ENCODE measurements at regions of chr1 and their contacts with region 1.

Region 1: GRCh38 chr1:27568300-27569087 is 35.5 kb downstream of the AHDC1 start:
- DNase-seq: no peak
- H3K4me3 ChIP-seq: peak overlapping the region; percentile 34
- H3K27ac ChIP-seq: no peak overlapping the region
- H3K27me3 ChIP-seq: no peaks in the 10 kb centered on the region
- CTCF ChIP-seq: peak; percentile 31

Region 2: GRCh38 chr1:27383039-27383605 is 185.4 kb before region 1 on chr1 and contains the start of gene CD164L2:
- in situ Hi-C with region 1: no loop called
- DNase-seq: no peak
- H3K4me3 ChIP-seq: no peak within 1 kb of the TSS
- H3K27ac ChIP-seq: no peak within 1 kb of the TSS
- H3K27me3 ChIP-seq: no peaks in the 10 kb centered on the region
- CTCF ChIP-seq: no peak

Region 3: DNA sequence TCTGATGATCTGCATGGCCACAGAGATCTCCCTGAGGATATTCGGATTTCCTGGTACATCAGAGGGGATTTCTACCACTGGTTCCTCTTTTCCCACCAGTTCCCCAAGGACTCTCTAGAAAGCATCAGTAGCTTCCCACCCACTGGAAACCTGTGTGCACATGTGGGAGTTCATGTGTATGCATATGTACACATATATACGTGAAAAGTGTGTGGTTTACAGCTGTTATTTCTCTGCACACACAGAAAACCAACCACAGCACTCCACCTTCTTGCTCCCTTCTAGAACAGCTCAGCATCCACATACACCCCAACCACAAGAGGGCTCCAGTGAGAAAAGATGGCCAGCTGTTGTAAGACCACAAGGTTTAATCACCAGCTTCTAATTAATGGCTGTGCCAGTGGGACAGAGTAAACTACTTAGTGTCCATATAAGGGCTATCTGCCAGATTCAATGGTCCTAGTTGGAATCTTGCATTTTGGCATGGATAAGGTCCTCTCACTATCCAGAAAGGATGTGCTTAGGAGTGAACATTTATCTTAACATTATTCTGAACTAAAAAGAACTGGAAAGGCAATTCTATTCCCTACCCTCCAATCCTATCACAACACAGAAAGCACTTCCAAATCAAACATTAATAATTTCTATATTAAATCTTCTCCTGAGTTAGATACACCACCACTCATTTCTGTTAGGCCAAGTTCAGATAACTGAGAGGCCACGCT is 151.9 kb before region 1 on chr1:
- in situ Hi-C with region 1: loop called (anchors 25 kb)
- DNase-seq: peak; percentile 62
- H3K4me3 ChIP-seq: no peak overlapping the region
- H3K27ac ChIP-seq: no peak overlapping the region
- H3K27me3 ChIP-seq: no peaks in the 10 kb centered on the region
- CTCF ChIP-seq: peak; percentile 87

Region 4: DNA sequence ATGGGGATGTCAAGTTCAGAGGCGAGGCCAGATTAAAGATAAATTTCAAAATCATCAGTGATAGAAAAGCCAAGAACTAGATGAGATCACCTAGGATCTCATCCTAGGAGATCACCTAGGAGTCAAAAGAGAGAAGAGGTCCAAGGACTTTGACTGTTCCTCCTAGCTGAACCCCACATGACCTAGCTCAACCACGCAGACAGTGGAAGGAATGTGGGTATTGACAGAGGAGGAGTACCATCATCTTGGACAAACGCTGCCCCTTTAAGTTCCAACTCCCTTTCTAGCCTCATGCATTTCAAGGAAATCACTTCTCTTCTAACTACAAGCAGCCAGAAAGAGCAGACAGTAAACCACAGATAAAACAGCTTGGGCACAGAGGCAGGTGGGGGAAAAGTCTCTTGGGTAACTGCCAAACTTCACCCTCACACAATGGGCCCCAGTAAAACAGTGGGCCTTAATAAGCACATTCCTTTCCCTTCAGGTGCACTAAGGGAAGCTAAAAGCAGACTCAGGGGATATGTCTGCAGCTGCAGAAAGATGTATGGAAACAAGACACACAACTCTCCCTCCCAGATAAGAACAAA is 144.7 kb after region 1 on chr1:
- in situ Hi-C with region 1: no loop called
- DNase-seq: no peak
- H3K4me3 ChIP-seq: no peak overlapping the region
- H3K27ac ChIP-seq: no peak overlapping the region
- H3K27me3 ChIP-seq: no peaks in the 10 kb centered on the region
- CTCF ChIP-seq: no peak

Region 5: GRCh38 chr1:28078680-28079626 is 510.5 kb after region 1 on chr1:
- in situ Hi-C with region 1: no loop called
- DNase-seq: peak; percentile 90
- H3K4me3 ChIP-seq: no peak overlapping the region
- H3K27ac ChIP-seq: peak overlapping the region; percentile 62
- H3K27me3 ChIP-seq: no peaks in the 10 kb centered on the region
- CTCF ChIP-seq: no peak

Measured in brain microvascular endothelial cell (primary cell).